Testis (tissue), 5 donors: ENCODE measurements at regions of chr10 and their contacts with region 1.

Region 1: DNA sequence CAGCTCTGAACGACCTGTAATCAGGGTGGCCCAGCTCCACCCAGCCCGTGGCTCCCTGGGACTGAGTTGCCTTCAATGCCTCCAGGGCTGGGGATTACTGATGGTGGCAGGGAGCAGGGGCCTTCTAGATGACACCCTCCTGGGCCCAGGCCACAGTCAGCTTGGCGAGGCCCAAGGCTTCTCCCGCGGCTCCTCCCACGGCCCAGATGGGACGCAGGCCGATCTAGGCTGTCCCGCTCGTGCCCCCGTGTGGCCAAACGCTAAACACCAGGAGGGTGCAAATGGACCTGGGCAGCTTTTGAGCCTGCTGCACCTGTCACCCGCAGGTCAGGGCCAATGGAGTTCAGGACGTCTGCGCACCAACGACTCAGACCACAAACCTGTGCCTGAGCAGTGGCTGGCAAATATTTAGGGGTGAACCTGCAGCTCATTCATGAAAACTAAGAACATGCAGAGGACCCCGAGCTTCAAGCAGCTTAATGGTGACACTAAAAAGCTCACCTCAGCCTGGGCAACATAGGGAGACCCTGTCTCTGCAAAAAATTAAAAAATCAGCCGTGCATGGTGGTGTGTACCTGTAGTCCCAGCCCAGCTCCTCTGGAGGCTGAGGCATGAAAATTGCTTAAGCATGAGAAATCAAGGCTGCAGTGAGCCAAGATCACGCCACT is 43.2 kb downstream of the ASB13 start:
- DNase-seq: peak; percentile 87
- H3K4me3 ChIP-seq: no peak overlapping the region
- H3K27ac ChIP-seq: no peak overlapping the region
- H3K4me1 ChIP-seq: peaks cover 26% of the 10 kb centered on the region
- H3K27me3 ChIP-seq: no peaks in the 10 kb centered on the region
- CTCF ChIP-seq: peak; percentile 75 to 85 (median 82)
- POLR2A ChIP-seq: no peak

Region 2: DNA sequence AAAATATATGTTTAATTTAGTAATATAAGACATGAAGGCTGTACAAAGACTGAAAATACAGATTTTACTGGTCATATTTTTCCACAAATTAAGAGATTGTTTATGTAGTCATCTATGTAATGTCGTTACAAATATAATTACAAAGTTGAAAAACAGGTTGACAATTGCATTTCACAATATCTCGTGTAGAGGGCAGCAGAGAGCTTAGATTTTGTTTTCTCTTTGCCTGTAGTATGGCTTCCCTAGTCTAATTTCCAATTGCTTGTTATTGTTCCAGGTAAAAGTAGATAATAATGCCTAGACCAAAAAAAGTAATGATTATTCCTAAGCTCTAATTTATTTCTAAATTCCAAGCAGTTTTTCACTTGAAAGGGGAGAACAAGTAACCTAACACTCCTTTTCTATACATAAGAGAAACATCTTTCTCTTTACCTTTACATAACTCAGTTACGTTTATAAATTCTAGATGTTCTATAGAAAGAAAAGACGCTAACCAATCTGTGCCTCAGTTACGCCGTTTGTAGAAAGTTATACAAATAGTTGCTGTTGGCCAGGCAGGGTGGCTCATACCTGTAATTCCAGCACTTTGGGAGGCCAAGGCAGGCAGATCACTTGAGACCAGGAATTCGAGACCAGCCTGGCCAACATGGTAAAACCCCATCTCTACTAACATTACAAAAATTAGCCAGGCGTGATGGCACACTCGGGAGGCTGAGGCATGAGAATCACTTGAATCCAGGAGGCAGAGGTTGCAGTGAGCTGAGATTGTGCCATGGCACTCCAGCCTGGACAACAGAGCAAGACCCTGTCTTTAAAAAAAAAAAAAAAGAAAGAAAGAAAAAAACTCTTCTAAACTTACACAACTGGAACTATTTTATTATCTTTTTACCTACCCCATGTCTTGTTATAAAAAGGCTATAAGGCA is 180.9 kb before region 1 on chr10:
- intact Hi-C with region 1: loop called (anchors 5 kb)
- DNase-seq: peak; percentile 57
- H3K4me3 ChIP-seq: no peak overlapping the region
- H3K27ac ChIP-seq: no peak overlapping the region
- H3K4me1 ChIP-seq: peaks cover 5% of the 10 kb centered on the region
- H3K27me3 ChIP-seq: no peaks in the 10 kb centered on the region
- CTCF ChIP-seq: peak; percentile 58 to 77 (median 73)
- POLR2A ChIP-seq: no peak